Colonic mucosa (tissue), 4 donors: ENCODE measurements at regions of chr3 and their contacts with region 1.

Region 1: GRCh38 chr3:150787741-150788370 is 24.9 kb upstream of the SIAH2 start:
- DNase-seq: peak; percentile 86
- H3K4me3 ChIP-seq: no peak overlapping the region
- H3K27ac ChIP-seq: no peak overlapping the region
- H3K4me1 ChIP-seq: no peaks in the 10 kb centered on the region
- H3K27me3 ChIP-seq: no peaks in the 10 kb centered on the region
- CTCF ChIP-seq: peak; percentile 86

Region 2: GRCh38 chr3:150870396-150870795 is 82.5 kb after region 1 on chr3:
- intact Hi-C with region 1: loop called (anchors 2 kb)
- DNase-seq: no peak
- H3K4me3 ChIP-seq: no peak overlapping the region
- H3K27ac ChIP-seq: no peak overlapping the region
- H3K4me1 ChIP-seq: no peaks in the 10 kb centered on the region
- H3K27me3 ChIP-seq: no peaks in the 10 kb centered on the region
- CTCF ChIP-seq: no peak